Sciatic nerve (tissue), 2 donors: ENCODE measurements at regions of chr4 and their contacts with region 1.

Region 1: GRCh38 chr4:13322681-13323101 is 161.4 kb downstream of the RAB28 start:
- DNase-seq: no peak
- ATAC-seq: no peak

Region 2: DNA sequence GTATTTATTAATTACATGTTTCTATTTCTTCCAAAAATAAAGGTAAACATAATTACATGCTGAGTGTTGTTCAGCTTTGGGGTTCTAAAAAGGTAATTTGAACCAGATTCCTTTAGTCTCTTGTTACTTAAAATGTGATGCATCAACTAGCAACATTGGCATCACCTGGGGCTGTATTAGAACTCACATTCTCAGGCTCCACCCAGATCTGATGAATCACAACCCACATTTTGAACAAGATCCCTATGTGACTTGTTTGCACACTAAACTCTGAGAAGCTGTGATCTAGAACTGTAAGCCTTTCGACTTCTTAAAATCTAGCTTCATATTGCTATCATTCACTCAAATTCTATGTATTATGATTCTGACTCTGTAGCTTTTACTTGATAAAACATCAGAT is 1871.0 kb before region 1 on chr4:
- intact Hi-C with region 1: loop called (anchors 5 kb)
- DNase-seq: no peak
- ATAC-seq: no peak

Region 3: GRCh38 chr4:12724510-12724909 is 598.2 kb before region 1 on chr4:
- intact Hi-C with region 1: no loop called
- DNase-seq: no peak
- ATAC-seq: no peak

Region 4: GRCh38 chr4:13386405-13387107 is 63.9 kb after region 1 on chr4:
- intact Hi-C with region 1: no loop called
- DNase-seq: no peak
- ATAC-seq: no peak